PC-9 (cell line): ENCODE measurements at regions of chr12 and their contacts with region 1.

Region 1: DNA sequence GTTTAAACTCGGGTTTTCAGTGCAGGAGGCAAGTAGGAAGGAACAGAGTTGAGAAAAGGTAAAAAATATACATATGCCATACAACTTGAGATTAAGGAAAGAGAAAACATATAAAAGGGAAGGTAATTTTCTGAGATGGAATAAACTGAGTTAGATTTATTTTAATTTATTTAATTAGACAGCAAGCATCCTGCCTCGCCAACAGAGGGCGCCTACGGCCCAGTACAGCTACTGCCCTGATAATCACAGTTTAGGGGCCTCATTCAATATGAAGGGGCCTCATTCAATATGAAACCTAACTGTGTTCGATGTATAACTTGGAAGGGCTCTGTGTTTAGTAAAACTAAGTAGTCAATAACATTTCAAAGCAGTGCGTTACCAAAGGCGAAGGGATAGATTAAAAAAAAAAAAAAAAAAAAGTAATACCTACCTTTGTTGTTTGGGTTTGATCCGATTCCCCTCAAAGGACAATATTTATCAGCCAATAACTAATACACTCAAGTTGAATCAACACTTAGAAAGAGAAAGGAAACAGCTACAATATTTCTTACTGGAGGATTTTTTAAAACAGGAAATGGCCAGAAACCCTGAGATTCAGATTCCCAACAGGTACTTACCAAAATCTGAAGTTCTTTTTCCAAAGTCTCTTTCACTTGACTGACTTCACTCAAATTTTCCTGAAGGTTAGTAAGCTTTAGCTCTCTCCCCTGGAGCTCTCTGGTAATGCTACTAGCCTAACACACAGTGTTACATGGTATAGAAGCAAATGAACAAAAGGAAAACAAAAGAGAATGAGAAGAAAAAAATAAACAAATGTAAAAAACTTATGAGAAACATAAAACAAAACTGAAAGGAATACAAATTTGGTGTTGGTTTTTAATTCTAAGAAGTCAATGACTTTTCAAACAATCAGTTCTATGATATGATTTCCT is 70.0 kb upstream of the VPS33A start:
- DNase-seq: peak in 1 of 2 experiments; percentile 29
- H3K4me3 ChIP-seq: no peak overlapping the region
- H3K27ac ChIP-seq: peak overlapping the region; percentile 36
- H3K4me1 ChIP-seq: no peaks in the 10 kb centered on the region
- H3K27me3 ChIP-seq: no peaks in the 10 kb centered on the region
- CTCF ChIP-seq: peak; percentile 87

Region 2: DNA sequence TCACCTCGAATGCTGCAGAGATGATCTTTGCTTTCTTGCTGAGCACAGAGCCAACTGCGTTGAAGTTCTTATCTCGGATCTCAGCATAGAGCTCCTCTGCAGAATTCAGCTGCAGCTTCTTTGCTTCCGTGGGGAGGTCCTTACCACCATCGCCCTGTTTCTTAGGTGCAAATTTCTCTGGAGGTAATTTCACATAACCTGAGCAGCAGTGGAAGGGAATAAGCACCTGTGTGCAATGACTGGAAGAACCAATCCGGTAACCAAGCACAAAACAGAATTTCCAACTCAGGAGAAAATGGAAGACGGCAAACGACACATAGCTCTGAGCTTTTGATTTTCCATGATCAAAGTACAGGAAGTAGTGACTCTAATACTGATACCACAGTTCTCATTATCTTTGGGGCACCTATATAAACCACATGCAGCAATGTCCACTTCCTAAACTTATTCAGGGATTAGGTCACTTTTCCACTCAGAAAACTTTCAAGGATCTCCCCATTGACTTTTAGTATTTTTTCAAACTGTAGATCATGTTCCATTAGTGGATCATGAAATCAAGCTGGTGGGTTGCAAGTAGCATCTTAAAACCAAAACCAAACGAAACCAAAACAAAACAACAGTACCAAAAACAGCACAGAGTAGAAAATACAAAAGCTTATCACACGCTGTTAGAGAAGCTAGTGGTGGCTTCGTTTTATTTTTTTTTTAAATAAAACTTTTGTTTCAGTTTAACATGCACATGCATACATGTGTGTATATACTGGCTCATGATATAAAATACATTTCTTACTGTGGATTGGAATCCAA is 91.5 kb before region 1 on chr12:
- CTCF ChIA-PET with region 1: interaction called, 15 read pairs
- POLR2A ChIA-PET with region 1: no interaction called
- intact Hi-C with region 1: no loop called
- DNase-seq: no peak
- H3K4me3 ChIP-seq: no peak overlapping the region
- H3K27ac ChIP-seq: no peak overlapping the region
- H3K4me1 ChIP-seq: no peaks in the 10 kb centered on the region
- H3K27me3 ChIP-seq: no peaks in the 10 kb centered on the region
- CTCF ChIP-seq: no peak

Region 3: GRCh38 chr12:122293081-122293480 is 43.2 kb before region 1 on chr12:
- CTCF ChIA-PET with region 1: interaction called, 13 read pairs
- POLR2A ChIA-PET with region 1: no interaction called
- intact Hi-C with region 1: no loop called
- DNase-seq: no peak
- H3K4me3 ChIP-seq: no peak overlapping the region
- H3K27ac ChIP-seq: no peak overlapping the region
- H3K4me1 ChIP-seq: no peaks in the 10 kb centered on the region
- H3K27me3 ChIP-seq: no peaks in the 10 kb centered on the region
- CTCF ChIP-seq: no peak

Region 4: DNA sequence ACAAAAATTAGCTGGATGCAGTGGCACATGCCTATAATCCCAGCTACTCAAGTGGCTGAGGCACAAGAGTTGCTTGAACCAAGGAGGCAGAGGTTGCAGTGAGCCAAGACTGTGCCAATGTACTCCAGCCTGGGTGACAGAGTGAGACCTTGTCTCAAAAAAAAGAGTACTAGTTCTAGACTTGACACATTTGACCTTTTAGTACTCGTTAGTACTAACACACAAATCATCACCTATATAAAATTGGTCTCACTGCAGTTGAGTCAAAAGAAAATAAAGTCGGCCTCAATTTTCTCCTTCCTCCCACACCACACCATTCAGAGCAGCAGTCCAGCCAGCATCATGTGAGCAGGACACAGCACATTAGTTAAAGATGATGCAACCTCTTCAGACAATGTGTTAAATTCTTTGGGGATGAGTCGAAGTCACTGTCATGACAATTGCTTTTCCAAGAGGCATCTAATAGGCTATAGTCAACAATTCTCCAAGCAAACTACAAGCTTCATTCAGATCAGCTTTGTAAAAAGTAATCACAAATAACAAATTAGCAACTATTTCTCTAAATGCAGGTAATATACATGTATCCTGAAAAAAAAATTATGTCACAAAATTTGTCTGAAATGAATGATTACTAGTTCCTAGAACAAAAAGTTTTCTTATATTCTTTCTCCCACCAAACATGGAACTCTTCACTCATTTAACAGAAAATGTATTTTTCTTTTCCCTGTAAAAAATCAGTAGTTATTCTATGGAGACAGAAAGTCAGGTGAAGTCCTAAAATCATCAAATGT is 30.6 kb after region 1 on chr12:
- CTCF ChIA-PET with region 1: no interaction called
- POLR2A ChIA-PET with region 1: no interaction called
- intact Hi-C with region 1: no loop called
- DNase-seq: peak; percentile 10 to 71
- H3K4me3 ChIP-seq: no peak overlapping the region
- H3K27ac ChIP-seq: peak overlapping the region; percentile 79
- H3K4me1 ChIP-seq: peaks cover 18% of the 10 kb centered on the region
- H3K27me3 ChIP-seq: no peaks in the 10 kb centered on the region
- CTCF ChIP-seq: no peak

Region 5: DNA sequence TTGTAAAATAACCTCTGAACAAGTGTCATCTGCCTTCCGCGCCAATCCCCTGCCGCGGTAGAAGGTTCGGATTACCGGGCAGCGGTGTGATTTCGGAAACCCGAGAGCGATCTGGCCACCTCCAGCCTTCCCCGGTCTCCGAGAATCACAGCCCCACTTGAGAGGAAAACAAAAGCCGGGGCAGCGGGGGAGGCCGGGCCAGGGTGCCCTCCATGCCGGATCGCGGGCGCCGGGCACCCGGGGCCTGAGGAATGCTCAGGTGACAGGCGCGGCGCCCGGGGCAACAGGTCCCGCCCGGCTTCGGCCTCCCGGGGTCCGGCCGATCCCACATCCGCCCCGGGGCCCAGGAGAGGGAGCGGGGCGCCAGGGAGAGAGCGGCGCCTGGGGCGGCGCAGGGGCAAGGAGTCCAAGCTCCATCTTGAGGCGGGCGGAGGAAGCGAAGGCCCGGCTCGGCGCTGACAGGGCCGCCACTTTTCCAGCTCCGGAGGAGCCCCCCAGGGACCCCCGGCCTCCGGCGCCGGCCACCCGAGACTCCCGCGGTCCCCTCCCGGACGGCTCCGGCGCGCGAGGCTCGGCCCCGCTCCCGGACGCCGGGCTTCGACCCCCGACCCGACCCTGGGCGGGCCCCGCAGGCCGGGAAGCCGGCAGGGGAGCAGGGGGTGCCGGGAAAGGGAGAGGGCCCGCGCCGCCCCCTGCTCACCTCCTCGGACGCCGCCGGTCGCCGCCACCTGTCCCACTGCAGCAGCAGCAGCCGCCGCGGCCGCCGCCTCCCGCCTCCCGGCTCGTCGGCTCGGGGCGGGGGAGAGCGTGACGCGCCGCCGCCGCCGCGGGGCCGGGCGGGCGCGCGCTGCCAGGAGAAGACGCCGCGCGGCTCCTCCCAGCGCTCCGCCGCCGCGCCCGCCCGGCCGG is 85.8 kb after region 1 on chr12 and contains the start of gene CLIP1:
- CTCF ChIA-PET with region 1: no interaction called
- POLR2A ChIA-PET with region 1: no interaction called
- intact Hi-C with region 1: no loop called
- DNase-seq: peak; percentile 67 to 83
- H3K4me3 ChIP-seq: peak within 1 kb of the TSS; percentile 71
- H3K27ac ChIP-seq: peak within 1 kb of the TSS; percentile 96
- H3K4me1 ChIP-seq: peaks cover 30% of the 10 kb centered on the region
- H3K27me3 ChIP-seq: no peaks in the 10 kb centered on the region
- CTCF ChIP-seq: peak; percentile 38; the same call in 1 of the 2 replicates
- total RNA-seq, gene CLIP1: 80.8 and 86.9 TPM in 2 replicates

Region 6: GRCh38 chr12:122500685-122501488 is 164.6 kb after region 1 on chr12 and contains the start of gene ZCCHC8:
- CTCF ChIA-PET with region 1: no interaction called
- POLR2A ChIA-PET with region 1: interaction called, 19 read pairs
- intact Hi-C with region 1: no loop called
- DNase-seq: peak; percentile 94 to 95
- H3K4me3 ChIP-seq: peak within 1 kb of the TSS; percentile 86
- H3K27ac ChIP-seq: peak within 1 kb of the TSS; percentile 91
- H3K4me1 ChIP-seq: peaks cover 23% of the 10 kb centered on the region; the same call in 1 of the 2 replicates
- H3K27me3 ChIP-seq: no peaks in the 10 kb centered on the region
- CTCF ChIP-seq: no peak
- total RNA-seq, gene ZCCHC8: 16.7 and 24.3 TPM in 2 replicates